Aorta (tissue), 5 donors: ENCODE measurements at regions of chr19 and their contacts with region 1.

Region 1: DNA sequence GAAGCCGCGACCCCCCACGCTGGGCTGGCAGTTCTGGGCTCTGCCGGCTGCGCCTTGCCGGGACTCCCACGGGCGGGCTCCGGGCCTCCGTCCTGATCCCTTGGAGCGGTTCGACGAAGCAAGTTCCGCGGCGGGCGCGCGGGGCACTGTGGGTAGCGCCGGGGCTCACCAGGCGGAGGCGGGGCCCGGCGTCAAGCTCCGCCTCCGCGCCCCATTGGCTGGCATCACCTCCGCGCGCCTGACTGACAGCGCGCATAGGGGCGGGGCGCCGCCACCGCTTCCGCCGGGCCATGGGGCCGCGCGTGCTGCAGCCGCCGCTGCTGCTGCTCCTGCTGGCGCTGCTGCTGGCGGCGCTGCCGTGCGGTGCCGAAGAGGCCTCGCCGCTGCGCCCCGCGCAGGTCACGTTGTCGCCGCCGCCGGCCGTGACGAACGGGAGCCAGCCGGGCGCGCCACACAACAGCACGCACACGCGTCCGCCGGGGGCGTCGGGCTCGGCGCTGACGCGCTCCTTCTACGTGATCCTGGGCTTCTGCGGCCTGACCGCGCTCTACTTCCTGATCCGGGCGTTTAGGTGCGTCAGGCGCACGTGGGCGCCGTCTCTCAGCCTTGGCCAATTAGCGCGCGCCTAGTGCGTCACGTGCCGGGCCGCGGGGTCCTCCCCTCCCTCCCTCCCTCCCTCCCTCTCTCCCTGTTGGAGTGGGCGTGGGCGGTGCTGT is at the start of gene FAM174C:
- DNase-seq: peak; percentile 97 to 98
- ATAC-seq: peak; percentile 90
- H3K4me3 ChIP-seq: peak within 1 kb of the TSS; percentile 31 to 35
- H3K27ac ChIP-seq: peak within 1 kb of the TSS; percentile 29 to 92
- H3K4me1 ChIP-seq: no peaks in the 10 kb centered on the region
- H3K27me3 ChIP-seq: no peaks in the 10 kb centered on the region
- total RNA-seq, gene FAM174C: 21.9 to 23.3 TPM

Region 2: DNA sequence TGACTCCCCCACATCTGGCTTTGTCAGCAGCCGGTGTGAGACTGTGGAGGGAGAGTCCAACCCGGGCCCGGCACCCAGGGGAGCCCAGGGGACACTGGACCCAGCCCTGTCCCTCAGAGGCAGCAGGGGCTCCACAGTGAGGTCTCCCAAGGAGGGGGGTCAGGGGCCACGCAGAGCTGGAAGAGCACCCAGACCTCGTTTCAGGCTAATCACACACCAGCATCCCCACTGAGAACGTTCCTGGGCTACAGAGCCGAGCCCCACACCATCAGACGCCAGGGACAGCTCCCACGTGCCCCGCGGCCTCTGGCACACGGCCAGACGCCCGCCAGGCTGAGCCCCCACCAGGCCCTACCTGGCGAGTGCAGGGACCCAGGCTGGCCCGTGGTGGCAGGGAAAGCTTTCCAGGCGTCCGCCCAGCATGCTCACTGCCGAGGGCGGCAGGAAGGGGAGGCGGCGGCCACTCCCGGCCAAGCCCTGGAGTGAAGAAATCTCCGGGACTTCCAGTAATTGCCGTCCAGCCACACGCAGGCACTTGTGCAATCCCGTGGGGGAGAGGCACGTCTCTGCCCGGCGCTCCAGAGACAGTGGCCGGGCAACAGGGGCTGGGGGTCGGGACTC is 120.6 kb before region 1 on chr19:
- intact Hi-C with region 1: no loop called
- DNase-seq: peak; percentile 95
- ATAC-seq: peak; percentile 90
- H3K4me3 ChIP-seq: no peak overlapping the region
- H3K27ac ChIP-seq: peak overlapping the region in 1 of 2 donors; percentile 95
- H3K4me1 ChIP-seq: no peaks in the 10 kb centered on the region
- H3K27me3 ChIP-seq: no peaks in the 10 kb centered on the region

Region 3: DNA sequence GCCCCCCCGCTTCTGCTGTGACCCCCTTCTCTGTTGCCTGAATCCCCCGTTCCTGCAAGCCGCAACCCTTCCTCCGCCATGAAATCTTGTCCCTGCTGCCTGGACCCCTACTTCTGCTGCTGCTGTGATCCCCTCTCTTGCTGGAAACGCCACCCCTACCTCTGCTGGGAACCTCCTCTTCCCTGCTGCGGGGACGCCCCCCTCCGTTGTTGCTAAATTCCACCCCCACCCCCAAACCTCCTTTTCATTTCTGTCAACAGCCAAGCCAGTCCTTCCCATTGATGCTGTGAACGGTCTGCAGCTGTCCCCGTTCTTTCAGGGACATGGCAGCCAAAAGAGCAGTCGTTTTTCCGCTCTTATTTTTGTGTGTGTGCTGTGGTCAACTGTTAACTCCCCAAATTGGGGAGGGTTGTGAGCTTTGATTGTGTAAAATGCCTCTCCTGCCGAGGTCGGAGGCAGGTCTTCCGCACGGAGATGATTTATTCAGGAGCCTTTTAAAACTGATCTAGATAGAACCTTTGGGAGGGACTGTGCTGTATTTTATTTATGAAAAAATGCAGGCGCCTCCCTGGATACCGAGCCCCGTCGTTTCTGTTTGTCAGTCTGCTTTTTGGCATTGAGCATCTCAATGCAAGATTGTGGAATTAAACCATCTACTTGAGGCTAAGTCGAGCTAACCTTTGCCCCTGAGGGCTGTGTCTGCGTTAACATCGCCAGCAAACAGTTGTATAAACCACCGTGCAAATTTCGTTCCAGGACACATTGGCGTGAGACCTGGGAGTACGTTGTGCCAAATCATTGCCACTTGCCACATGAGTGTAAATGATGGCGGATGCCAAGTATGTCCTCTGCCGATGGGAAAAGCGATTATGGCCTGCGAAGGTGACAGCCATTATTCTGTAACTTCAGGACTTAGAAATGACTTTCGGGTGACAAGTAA is 80.4 kb after region 1 on chr19:
- intact Hi-C with region 1: loop called in 1 of 2 experiments (anchors 5 kb)
- DNase-seq: no peak
- ATAC-seq: no peak
- H3K4me3 ChIP-seq: peak overlapping the region; percentile 75 to 89
- H3K27ac ChIP-seq: peak overlapping the region in 1 of 2 donors; percentile 0
- H3K4me1 ChIP-seq: no peaks in the 10 kb centered on the region
- H3K27me3 ChIP-seq: no peaks in the 10 kb centered on the region

Region 4: GRCh38 chr19:1383311-1384084 is 108.1 kb after region 1 on chr19 and contains the start of gene NDUFS7:
- intact Hi-C with region 1: loop called in 1 of 2 experiments (anchors 2 kb)
- DNase-seq: peak; percentile 94 to 95
- ATAC-seq: peak; percentile 95
- H3K4me3 ChIP-seq: peak within 1 kb of the TSS; percentile 50 to 77
- H3K27ac ChIP-seq: no peak within 1 kb of the TSS
- H3K4me1 ChIP-seq: peaks cover 0 to 3% of the 10 kb centered on the region in 2 donors
- H3K27me3 ChIP-seq: no peaks in the 10 kb centered on the region
- total RNA-seq, gene NDUFS7: 47.7 to 47.8 TPM

Region 5: GRCh38 chr19:1401138-1401888 is 125.9 kb after region 1 on chr19 and contains the start of gene GAMT:
- intact Hi-C with region 1: loop called in 1 of 2 experiments (anchors 5 kb)
- DNase-seq: no peak
- ATAC-seq: peak; percentile 70
- H3K4me3 ChIP-seq: peak within 1 kb of the TSS; percentile 46 to 58
- H3K27ac ChIP-seq: no peak within 1 kb of the TSS
- H3K4me1 ChIP-seq: no peaks in the 10 kb centered on the region
- H3K27me3 ChIP-seq: no peaks in the 10 kb centered on the region
- total RNA-seq, gene GAMT: 7.9 to 16.1 TPM

Region 6: GRCh38 chr19:1507763-1508509 is 232.5 kb after region 1 on chr19:
- intact Hi-C with region 1: loop called in 1 of 2 experiments (anchors 10 kb)
- DNase-seq: peak; percentile 93 to 95
- ATAC-seq: peak; percentile 93
- H3K4me3 ChIP-seq: no peak overlapping the region
- H3K27ac ChIP-seq: peak overlapping the region in 1 of 2 donors; percentile 35
- H3K4me1 ChIP-seq: no peaks in the 10 kb centered on the region
- H3K27me3 ChIP-seq: no peaks in the 10 kb centered on the region